ENCODE measurements at regions of chr2 and their contacts with region 1.

Region 1: GRCh38 chr2:84495539-84496146 is 20.7 kb upstream of the DNAH6 start:
- DNase-seq: peak in 1 of 2 donors; percentile 41
- ATAC-seq: peak in 7 of 8 donors; percentile 68 to 85 (median 77)
- H3K4me3 ChIP-seq: no peak overlapping the region
- H3K27ac ChIP-seq: no peak overlapping the region
- H3K4me1 ChIP-seq: peaks cover 0 to 4% (median 0%) of the 10 kb centered on the region in 9 donors
- H3K27me3 ChIP-seq: no peaks in the 10 kb centered on the region
- CTCF ChIP-seq: peak; percentile 44 to 83 (median 74)

Region 2: GRCh38 chr2:84556190-84556589 is 60.5 kb after region 1 on chr2:
- intact Hi-C with region 1: no loop called
- DNase-seq: no peak
- ATAC-seq: no peak
- H3K4me3 ChIP-seq: no peak overlapping the region
- H3K27ac ChIP-seq: no peak overlapping the region
- H3K4me1 ChIP-seq: no peaks in the 10 kb centered on the region
- H3K27me3 ChIP-seq: peaks cover 0 to 6% (median 0%) of the 10 kb centered on the region in 7 donors
- CTCF ChIP-seq: no peak

Region 3: DNA sequence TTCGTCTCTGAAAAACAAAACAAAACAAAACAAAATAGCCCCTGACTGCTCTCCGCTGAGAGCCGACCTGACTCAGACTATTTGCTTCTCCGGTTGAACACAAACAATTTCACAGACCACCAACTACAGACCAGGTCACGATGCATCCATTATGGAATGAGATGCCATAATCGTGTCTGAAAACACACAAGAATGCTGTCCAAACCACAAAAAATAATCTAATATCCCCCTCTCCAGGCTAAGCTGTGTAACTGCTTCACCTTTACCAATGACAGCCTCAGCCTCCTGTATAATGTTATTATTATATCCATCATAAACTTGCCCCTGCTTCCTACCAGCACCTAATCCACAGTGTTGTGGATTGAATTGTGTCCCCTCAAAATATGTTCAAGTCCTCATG is 135.4 kb after region 1 on chr2:
- intact Hi-C with region 1: loop called in 8 of 10 experiments (anchors 2 to 10 kb)
- DNase-seq: no peak
- ATAC-seq: peak in 1 of 8 donors; percentile 47
- H3K4me3 ChIP-seq: no peak overlapping the region
- H3K27ac ChIP-seq: no peak overlapping the region
- H3K4me1 ChIP-seq: no peaks in the 10 kb centered on the region
- H3K27me3 ChIP-seq: no peaks in the 10 kb centered on the region
- CTCF ChIP-seq: peak in 8 of 9 donors; percentile 36 to 58 (median 52)

Region 4: GRCh38 chr2:84858123-84858522 is 362.5 kb after region 1 on chr2:
- intact Hi-C with region 1: loop called in 3 of 10 experiments (anchors 2 to 5 kb)
- DNase-seq: no peak
- ATAC-seq: no peak
- H3K4me3 ChIP-seq: no peak overlapping the region
- H3K27ac ChIP-seq: no peak overlapping the region
- H3K4me1 ChIP-seq: peaks cover 0 to 18% (median 0%) of the 10 kb centered on the region in 9 donors
- H3K27me3 ChIP-seq: peaks cover 0 to 4% (median 0%) of the 10 kb centered on the region in 7 donors
- CTCF ChIP-seq: peak in 6 of 9 donors; percentile 7 to 40 (median 36)

Region 5: GRCh38 chr2:84865181-84865783 is 369.6 kb after region 1 on chr2:
- intact Hi-C with region 1: loop called in 7 of 10 experiments (anchors 1 to 5 kb)
- DNase-seq: no peak
- ATAC-seq: peak in 3 of 8 donors; percentile 18 to 45 (median 35)
- H3K4me3 ChIP-seq: no peak overlapping the region
- H3K27ac ChIP-seq: no peak overlapping the region
- H3K4me1 ChIP-seq: peaks cover 0 to 5% (median 0%) of the 10 kb centered on the region in 9 donors
- H3K27me3 ChIP-seq: no peaks in the 10 kb centered on the region
- CTCF ChIP-seq: peak in 7 of 9 donors; percentile 24 to 52 (median 47)

Region 6: GRCh38 chr2:84870306-84870705 is 374.7 kb after region 1 on chr2:
- intact Hi-C with region 1: loop called in 6 of 10 experiments (anchors 1 to 5 kb)
- DNase-seq: no peak
- ATAC-seq: no peak
- H3K4me3 ChIP-seq: no peak overlapping the region
- H3K27ac ChIP-seq: no peak overlapping the region
- H3K4me1 ChIP-seq: no peaks in the 10 kb centered on the region
- H3K27me3 ChIP-seq: no peaks in the 10 kb centered on the region
- CTCF ChIP-seq: no peak

Region 7: DNA sequence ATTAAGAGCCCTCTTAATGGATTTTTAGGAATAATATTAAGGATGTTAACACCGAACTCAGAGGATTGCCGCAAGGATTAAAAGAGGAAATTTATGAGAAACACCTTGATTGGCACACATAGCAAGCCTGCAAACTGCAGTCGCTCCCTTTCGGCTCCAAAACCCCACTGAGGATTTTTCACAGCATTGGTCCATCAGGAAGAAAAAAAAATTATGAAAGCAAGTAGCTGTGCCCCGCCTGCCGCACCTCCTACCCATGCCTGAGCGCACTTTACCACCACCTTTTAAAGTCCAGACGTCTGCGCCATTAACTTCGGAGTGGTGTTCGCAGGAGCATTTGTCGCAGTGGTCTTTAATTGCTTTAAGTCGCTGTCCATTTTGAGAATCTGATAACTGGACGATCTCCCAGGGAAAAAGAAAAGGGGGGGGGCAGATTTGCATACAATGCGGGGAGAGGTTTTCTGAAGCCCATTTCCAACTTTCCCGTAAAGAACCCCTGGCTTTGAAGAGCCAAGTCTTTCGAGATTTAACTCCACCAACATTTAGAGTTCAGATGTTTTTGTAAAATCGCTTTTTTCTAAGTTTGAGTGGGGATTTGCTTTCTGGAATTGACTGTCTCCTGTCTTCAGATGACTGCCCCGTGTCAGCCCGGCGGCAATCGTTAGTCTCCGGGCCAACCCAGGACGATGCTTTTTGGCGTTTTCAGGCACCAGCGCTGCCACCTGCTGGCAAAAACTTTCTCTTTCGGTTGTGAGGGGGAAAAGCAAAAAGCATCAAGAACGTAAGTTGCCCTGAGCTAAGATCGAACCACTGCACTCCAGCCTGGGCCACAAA is 386.2 kb after region 1 on chr2:
- intact Hi-C with region 1: loop called in 9 of 10 experiments (anchors 1 to 10 kb)
- DNase-seq: peak; percentile 74 to 83
- ATAC-seq: peak; percentile 68 to 92 (median 85)
- H3K4me3 ChIP-seq: peak overlapping the region; percentile 27 to 69 (median 55)
- H3K27ac ChIP-seq: peak overlapping the region in 1 of 10 donors; percentile 71
- H3K4me1 ChIP-seq: peaks cover 8 to 30% (median 20%) of the 10 kb centered on the region in 9 donors
- H3K27me3 ChIP-seq: peaks cover 5 to 55% (median 26%) of the 10 kb centered on the region in 7 donors
- CTCF ChIP-seq: peak; percentile 47 to 84 (median 70)

Region 8: DNA sequence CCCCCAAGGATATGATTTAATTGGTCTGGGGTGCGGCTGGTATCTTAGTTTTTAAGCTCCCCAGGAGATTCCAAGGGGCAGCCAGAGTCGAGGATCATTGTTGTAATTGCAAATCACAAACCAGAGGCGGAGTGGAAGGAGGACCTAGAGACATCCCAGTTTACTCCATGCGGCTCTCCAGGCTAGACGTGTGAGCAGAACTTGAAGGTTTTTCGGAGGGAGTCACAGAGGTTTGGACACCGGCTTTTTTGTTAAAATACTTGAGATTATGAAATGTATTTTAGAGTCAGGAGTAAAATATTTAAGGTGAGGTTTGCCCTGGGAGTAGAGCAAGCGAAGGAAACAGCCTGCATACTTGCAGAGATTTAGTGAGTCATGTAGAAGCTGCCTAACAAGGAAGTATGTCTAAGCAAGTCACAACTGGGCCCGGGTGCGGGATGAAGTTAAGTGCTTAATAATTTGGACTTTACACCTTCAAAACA is 792.6 kb after region 1 on chr2:
- intact Hi-C with region 1: loop called in 1 of 10 experiments (anchors 10 kb)
- DNase-seq: no peak
- ATAC-seq: no peak
- H3K4me3 ChIP-seq: no peak overlapping the region
- H3K27ac ChIP-seq: no peak overlapping the region
- H3K4me1 ChIP-seq: peaks cover 0 to 18% (median 12%) of the 10 kb centered on the region in 9 donors
- H3K27me3 ChIP-seq: no peaks in the 10 kb centered on the region
- CTCF ChIP-seq: no peak

Measured in heart right ventricle (tissue), 16 donors.